ENCODE measurements at regions of chr11 and their contacts with region 1.

Region 1: DNA sequence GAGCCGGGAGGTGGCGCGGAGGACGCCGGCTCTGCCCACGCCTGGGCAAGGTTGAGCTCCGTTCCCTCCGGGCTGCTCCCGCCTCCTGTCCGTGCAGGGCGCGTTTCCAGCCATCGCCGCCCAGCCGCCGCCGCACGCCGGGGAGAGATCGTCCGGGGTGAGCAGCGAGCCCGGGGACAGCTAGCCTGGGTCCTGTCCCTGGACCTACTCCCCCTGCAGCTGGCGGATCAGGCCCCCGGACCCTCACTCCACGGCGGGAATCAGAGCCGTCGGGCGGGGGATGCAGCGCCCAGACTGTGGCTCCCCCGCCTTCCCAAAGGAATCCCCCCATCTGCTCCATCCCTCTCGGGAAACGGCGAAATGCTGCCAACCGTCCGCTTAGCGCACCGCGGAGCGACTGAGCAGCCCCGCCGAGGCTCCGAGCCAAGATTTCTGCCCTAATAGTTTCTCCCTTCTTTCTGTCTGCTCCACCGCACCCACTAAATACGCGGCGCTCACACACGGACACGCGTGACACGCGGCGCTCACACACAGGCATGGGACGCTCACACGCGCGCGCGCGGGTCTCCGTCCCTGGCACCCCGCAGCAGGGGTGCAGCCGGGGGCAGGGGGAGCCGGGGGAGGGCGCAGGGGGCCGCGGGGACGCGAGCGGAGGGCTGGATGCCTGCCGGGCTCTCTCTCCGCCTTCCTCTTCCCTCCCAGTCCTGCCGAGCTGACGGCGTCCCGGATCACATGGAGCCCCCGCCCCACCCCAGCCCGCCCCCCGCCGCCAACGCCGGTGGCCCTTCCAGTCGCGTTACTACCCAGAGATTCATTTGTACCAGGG is at the start of gene KCNJ5:
- DNase-seq: peak in 2 of 5 donors; percentile 17 to 26
- H3K4me3 ChIP-seq: no peak within 1 kb of the TSS
- H3K4me3 Mint-ChIP-seq: peak within 1 kb of the TSS; percentile 74 to 92 (median 84)
- H3K27ac ChIP-seq: no peak within 1 kb of the TSS
- H3K27ac Mint-ChIP-seq: peak within 1 kb of the TSS in 1 of 7 donors; percentile 81
- H3K4me1 ChIP-seq: peaks cover 12% of the 10 kb centered on the region
- H3K4me1 Mint-ChIP-seq: peaks cover 5 to 24% (median 11%) of the 10 kb centered on the region in 4 donors
- H3K27me3 ChIP-seq: peaks cover 25% of the 10 kb centered on the region
- H3K27me3 Mint-ChIP-seq: peaks cover 31 to 43% of the 10 kb centered on the region in 2 donors
- total RNA-seq, gene KCNJ5: 0.23 to 0.33 TPM

Region 2: DNA sequence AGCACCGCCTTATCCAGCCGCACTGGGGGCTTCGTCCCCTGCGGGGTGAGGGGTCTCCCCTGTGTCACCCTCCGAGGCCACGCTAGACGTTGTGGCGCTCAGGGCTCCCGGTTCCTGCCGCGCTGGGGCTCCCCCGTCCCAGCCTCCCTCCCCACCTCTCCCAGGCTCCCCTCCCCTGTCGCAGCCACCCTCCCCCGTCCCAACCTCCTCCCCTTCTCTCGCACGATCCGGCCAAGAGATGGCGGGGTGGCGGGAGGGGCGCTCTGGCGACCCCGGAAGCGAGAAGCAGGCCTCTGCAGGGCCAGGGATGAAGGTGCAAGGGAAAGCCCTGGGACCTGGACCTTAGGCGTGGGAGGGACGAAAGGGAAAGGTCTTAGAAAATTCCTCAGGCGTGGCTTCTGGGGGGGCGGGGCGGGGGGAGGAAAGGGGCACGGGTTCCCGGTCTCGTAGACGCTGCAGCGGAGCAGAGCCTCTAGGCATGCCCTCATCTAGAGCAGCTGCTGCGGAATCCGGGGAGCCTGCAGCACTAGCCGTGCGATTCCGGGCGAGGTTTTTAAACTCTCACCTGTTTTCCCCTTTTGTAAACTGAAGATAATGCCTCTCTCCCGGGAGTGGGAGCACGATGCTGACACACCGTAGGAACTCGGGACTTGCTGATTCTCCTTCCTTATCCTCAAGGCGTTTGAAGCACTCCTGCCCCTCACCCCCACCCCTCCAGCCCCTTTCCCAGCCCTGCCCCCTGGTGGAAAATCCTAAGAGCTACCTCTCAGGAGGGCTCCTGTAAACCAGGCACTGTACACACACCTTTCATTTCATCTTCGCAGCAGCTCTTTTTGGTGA is 14.8 kb after region 1 on chr11:
- CTCF ChIA-PET with region 1: interaction called, 104 read pairs
- POLR2A ChIA-PET with region 1: no interaction called
- intact Hi-C with region 1: no loop called
- DNase-seq: peak; percentile 43 to 59 (median 49)
- H3K4me3 ChIP-seq: peak overlapping the region in 1 of 2 donors; percentile 10
- H3K4me3 Mint-ChIP-seq: peak overlapping the region; percentile 82 to 88 (median 83)
- H3K27ac ChIP-seq: no peak overlapping the region
- H3K27ac Mint-ChIP-seq: peak overlapping the region in 1 of 7 donors; percentile 11
- H3K4me1 ChIP-seq: peaks cover 10% of the 10 kb centered on the region
- H3K4me1 Mint-ChIP-seq: peaks cover 11 to 27% (median 16%) of the 10 kb centered on the region in 4 donors
- H3K27me3 ChIP-seq: peaks cover 15% of the 10 kb centered on the region
- H3K27me3 Mint-ChIP-seq: peaks cover 17 to 18% of the 10 kb centered on the region in 2 donors

Measured in CD4-positive, alpha-beta memory T cell (primary cell).